ENCODE measurements at regions of chr15 and their contacts with region 1.

Region 1: DNA sequence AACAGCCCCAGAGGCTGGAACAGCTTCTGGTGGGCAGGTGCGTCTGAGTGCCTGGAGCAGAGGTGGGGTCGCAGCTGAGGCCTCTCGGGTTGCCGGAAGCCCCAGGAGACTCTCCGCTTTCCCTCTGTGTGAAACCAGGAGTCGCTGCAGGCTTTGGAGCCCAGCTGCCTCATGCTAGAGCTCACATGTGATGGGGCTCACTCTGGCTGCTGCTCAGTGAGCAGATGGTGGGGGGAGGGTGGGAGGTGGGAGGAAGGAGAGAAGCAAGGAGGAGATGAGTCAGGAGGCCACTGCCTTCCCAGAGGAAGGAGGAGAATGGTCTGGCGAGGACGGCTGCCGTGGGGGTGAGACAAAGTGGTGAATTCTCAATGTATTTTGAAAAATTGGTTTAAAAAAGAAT is 290.1 kb upstream of the CHRNA7 start:
- DNase-seq: no peak
- ATAC-seq: no peak
- H3K4me3 ChIP-seq: no peak overlapping the region
- H3K27ac ChIP-seq: no peak overlapping the region
- H3K4me1 ChIP-seq: no peaks in the 10 kb centered on the region
- H3K27me3 ChIP-seq: no peaks in the 10 kb centered on the region
- CTCF ChIP-seq: no peak

Region 2: DNA sequence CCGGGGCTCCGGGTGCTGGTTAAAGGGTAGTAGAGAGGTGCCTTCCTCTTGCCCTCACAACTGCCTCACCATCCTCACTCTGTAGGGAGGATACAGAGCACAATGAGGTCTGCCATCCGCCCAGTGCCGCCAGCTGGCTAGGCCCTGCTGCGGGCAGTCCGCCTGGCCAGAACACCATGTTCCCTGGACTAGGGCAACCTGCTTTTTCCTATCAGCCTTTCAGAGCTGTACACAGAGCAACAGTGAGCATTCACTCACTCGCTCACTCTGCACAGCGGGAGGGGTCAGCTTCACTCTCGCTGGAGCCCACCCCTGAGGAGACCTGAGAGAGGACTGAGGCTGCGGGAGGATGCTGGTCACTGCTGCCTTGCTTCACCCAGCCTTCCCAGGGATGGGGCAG is 71.4 kb after region 1 on chr15:
- intact Hi-C with region 1: loop called in 1 of 10 experiments (anchors 10 kb)
- DNase-seq: no peak
- ATAC-seq: peak in 6 of 8 donors; percentile 22 to 95 (median 61)
- H3K4me3 ChIP-seq: no peak overlapping the region
- H3K27ac ChIP-seq: no peak overlapping the region
- H3K4me1 ChIP-seq: peaks cover 0 to 5% (median 0%) of the 10 kb centered on the region in 9 donors
- H3K27me3 ChIP-seq: no peaks in the 10 kb centered on the region
- CTCF ChIP-seq: no peak

Region 3: DNA sequence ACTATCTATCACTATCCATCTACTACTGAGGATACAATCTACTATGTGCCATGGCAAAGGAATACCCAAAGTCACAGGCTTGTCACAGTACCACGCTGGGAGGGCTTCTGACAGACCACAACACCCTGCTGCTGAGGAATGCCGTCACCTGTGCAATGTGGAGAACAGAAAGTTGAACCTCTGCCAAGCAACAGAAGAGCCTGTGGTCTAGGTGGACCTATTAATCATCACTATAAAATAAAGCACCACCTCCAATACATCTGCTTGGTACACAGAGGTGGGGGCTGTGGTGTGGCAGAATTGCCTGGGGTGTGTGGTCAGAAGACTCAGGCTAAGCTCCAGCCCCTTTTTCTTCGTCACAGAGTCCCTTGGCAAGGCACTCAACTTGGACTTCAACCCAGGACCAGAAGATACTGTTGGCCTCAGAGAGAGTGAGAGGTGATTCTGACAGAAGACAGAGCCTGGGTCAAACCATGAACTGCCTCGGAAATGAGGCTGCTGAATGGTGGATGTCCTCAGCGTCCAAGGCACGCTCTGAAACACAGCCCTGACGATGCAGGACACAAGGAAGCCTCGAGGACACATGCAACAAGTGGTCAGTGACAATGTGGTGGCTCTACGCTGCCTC is 100.8 kb after region 1 on chr15:
- intact Hi-C with region 1: loop called in 1 of 10 experiments (anchors 10 kb)
- DNase-seq: peak in 1 of 2 donors; percentile 68
- ATAC-seq: peak; percentile 84 to 97 (median 94)
- H3K4me3 ChIP-seq: peak overlapping the region in 1 of 10 donors; percentile 18
- H3K27ac ChIP-seq: peak overlapping the region in 8 of 10 donors; percentile 27 to 77 (median 62)
- H3K4me1 ChIP-seq: peaks cover 0 to 11% (median 7%) of the 10 kb centered on the region in 9 donors
- H3K27me3 ChIP-seq: no peaks in the 10 kb centered on the region
- CTCF ChIP-seq: no peak

Region 4: DNA sequence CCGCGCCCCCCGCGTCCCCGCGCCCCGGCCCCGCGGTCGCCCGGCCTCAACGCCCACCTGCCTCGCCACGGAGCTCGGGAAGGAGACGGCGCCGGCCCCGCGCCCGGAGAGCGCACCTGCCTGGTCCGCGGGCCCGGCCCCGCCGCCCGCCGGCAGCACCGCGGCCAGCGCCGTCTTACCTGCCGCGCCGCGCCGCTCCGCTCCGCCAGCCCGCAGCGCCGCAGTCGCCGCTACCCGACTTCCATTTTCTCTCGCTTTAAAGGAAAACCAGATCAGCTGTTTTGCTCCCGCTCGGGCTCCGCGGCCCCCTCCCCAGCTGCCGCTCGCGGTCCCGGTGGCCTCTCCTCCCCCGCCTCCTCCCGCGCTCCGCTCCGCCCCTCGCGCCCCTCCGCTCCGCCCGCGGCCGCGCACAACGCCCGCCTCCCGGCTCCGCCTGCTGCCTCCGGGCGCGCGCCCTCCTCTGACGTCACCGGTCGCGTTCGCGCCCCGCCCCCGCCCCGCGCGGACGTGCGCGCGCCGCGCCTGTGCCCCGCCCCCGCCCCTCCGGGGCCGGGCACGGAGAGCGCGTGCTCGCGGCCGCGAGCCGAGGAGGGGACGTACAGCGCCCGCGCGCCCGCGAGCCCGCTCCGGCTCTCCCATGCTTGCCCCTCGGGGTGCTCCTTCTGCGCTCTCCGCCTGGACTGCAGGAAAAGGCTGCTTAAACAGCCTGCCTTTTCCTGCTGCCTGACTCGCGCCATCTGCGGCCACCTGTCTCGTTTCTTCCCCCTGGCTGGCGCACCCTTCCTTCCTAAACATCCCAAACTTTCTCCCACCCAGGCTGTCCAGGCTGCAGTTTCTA is 130.3 kb after region 1 on chr15:
- intact Hi-C with region 1: loop called in 1 of 10 experiments (anchors 5 kb)
- DNase-seq: peak; percentile 84 to 90
- ATAC-seq: peak; percentile 96 to 99 (median 97)
- H3K4me3 ChIP-seq: peak within 1 kb of the TSS in 9 of 10 donors; percentile 51 to 69 (median 66)
- H3K27ac ChIP-seq: peak within 1 kb of the TSS in 9 of 10 donors; percentile 2 to 80 (median 75)
- H3K4me1 ChIP-seq: peaks cover 0 to 28% (median 5%) of the 10 kb centered on the region in 9 donors
- H3K27me3 ChIP-seq: peaks cover 0 to 13% (median 0%) of the 10 kb centered on the region in 7 donors
- CTCF ChIP-seq: no peak